Tibial artery (tissue), 4 donors: ENCODE measurements at regions of chr1 and their contacts with region 1.

Region 1: GRCh38 chr1:212234431-212235395 is 50.5 kb upstream of the PPP2R5A start:
- DNase-seq: peak; percentile 69 to 83
- H3K4me3 ChIP-seq: no peak overlapping the region
- H3K27ac ChIP-seq: peak overlapping the region; percentile 11 to 54
- H3K4me1 ChIP-seq: peaks cover 0 to 35% (median 28%) of the 10 kb centered on the region in 4 donors
- H3K27me3 ChIP-seq: no peaks in the 10 kb centered on the region
- CTCF ChIP-seq: no peak

Region 2: DNA sequence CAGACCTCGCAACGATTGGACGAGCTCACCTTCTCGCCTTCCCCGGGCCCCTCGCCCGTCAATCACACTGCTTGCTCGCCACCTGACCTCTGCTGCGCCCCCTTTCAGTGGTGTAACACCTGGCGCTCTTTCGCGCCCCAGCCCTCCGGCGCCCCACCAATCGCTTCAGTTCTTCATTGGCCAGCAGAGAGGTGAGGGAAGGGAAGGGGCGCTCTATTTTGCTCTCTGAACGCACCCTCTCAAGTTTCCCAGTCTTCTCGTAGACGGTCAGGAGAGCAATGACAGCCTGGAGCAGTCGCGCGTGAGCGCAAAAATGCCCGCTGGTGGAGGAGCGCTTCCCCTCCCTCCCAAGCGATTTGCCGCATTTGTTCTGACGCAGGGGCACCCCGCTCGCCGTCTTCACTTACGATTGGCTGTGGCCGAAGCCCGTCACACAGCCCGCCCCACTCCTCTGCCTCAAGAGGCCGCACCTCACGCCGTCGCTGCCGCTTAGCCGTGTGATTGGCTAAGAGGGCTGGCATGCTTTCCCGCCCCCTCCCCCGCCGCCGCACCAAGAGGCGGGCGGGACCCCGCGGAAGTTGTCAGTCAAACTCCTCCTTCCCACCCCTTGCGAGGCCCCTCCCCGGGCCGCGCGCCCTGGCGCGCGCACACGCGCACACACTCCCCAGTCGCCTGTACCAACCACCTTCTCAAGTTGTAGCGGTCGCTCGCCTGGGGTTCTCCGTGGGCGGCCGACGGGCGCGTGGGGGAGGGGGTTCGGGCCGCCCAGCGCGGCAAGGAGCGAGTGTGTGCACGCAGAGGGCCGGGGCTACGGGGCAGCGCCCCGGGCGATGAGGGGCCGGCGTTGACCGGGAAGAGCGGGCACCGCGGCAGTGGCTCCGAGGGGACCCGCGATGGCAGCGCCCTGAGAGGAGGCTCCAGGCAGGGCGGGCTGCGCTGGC is 50.3 kb after region 1 on chr1 and contains the start of gene PPP2R5A:
- intact Hi-C with region 1: loop called (anchors 10 kb)
- DNase-seq: peak; percentile 99 to 100
- H3K4me3 ChIP-seq: peak within 1 kb of the TSS; percentile 83 to 88
- H3K27ac ChIP-seq: peak within 1 kb of the TSS; percentile 96 to 99
- H3K4me1 ChIP-seq: peaks cover 0 to 30% (median 19%) of the 10 kb centered on the region in 4 donors
- H3K27me3 ChIP-seq: no peaks in the 10 kb centered on the region
- CTCF ChIP-seq: no peak